Ovary (tissue), 10 donors: ENCODE measurements at regions of chr22 and their contacts with region 1.

Region 1: DNA sequence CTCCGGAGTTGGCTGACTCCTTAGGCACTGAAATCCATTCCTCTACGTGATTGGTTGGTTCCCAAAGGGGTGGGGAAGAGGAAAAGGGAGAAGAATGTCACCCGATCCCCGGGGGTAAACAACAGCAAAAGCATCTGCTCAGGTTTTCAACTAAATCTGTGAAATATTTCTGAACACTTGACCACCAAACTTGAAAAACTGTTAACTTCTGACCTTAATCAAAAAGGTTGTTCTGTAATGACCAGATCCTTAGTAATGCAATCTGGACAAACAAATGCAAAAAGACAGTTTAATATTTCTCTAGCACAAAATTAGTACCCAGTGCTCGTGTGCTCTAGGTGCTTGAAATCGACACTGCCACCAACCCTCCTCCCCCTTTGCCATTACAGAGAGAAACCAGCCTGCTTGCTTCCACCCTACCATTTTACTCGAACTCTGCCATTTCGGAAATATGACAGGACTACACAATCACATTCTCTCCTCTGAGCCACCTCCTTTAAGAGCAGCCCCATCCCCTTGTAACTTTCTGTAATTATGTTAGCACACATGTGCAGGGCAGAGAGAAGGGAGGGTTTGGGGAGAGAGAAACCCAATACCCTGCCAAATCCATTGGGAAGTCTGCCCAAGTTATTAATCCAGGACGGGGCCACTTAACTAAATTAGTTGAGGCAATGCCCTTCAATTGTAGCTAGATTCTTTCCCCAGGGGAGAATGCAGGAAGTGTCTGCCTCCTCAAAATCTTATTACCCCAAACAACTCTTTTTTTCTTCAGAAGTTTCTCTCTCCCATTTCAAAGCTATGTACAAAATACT is 113.8 kb downstream of the RBFOX2 start:
- DNase-seq: peak in 2 of 5 donors; percentile 41 to 65
- H3K4me3 ChIP-seq: peak overlapping the region; percentile 44
- H3K27ac ChIP-seq: peak overlapping the region; percentile 13 to 49
- H3K4me1 ChIP-seq: peaks cover 31% of the 10 kb centered on the region
- H3K27me3 ChIP-seq: no peaks in the 10 kb centered on the region
- CTCF ChIP-seq: no peak
- EP300 ChIP-seq: no peak
- POLR2A ChIP-seq: no peak

Region 2: DNA sequence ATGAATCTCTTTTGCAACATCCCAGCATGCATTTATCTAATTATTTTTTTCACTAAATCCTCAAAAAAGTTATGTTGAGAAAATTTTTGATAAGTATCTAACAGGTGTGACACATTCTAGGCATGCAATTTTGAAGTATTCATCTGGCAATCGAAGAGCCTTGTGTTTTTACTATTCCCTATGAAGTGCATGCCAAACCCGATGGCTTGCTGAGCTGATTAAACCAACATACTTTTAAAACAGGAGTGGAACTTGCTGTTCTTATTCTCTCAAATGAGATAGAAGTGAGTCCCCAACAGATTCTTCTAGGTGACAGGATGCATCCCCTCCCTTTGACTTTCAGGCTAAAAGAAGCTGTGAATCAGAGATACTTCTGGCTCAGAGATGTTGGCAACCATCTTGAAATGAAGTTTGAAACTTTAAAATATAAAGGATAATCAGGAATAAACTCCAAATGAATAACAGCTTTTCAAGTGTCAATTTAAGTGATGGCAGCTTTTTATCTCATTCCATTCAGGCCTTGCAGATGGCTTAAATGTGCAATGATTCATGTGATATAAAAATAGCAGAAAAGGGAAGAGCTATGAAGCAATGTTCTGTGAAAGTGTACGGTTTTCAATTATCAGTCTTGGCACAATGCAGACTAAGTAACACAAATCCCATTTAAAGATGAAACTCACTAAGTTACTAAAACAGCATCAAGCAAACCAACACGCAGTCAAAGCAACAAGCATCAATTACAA is 129.5 kb before region 1 on chr22:
- intact Hi-C with region 1: loop called in 1 of 4 experiments (anchors 10 kb)
- DNase-seq: no peak
- H3K4me3 ChIP-seq: no peak overlapping the region
- H3K27ac ChIP-seq: no peak overlapping the region
- H3K4me1 ChIP-seq: peaks cover 8% of the 10 kb centered on the region
- H3K27me3 ChIP-seq: no peaks in the 10 kb centered on the region
- CTCF ChIP-seq: no peak
- EP300 ChIP-seq: no peak
- POLR2A ChIP-seq: no peak